Endothelial cell of umbilical vein (primary cell): ENCODE measurements at regions of chr6 and their contacts with region 1.

Region 1: DNA sequence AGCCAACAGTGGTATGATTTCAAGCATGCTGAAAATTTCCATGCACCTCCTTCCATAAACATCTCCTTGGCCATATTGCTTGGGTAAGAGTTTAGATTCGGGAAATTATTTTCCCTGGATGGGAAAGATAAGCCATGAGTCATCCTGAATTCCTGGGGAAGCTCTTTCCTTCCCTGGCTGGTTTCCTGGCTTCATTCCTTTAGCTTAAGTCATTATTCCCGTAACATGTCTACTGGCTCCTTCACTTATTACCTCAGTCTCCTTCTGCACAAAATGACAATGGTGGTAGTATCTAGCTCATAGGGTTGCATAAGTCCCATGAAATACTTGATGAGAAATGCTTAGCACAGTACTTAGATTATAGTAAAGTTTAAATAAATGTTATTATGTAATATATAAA is 27.6 kb downstream of the TINAG start:
- DNase-seq: peak; percentile 99
- H3K4me3 ChIP-seq: no peak overlapping the region
- H3K27ac ChIP-seq: peak overlapping the region; percentile 94
- H3K4me1 ChIP-seq: peaks cover 28% of the 10 kb centered on the region
- H3K27me3 ChIP-seq: no peaks in the 10 kb centered on the region
- CTCF ChIP-seq: no peak
- POLR2A ChIP-seq: peak; percentile 90

Region 2: GRCh38 chr6:54191461-54191860 is 144.4 kb before region 1 on chr6:
- CTCF ChIA-PET with region 1: no interaction called
- POLR2A ChIA-PET with region 1: no interaction called
- dilution Hi-C with region 1: no loop called
- intact Hi-C with region 1: loop called (anchors 2 kb)
- DNase-seq: peak; percentile 79
- H3K4me3 ChIP-seq: no peak overlapping the region
- H3K27ac ChIP-seq: no peak overlapping the region
- H3K4me1 ChIP-seq: peaks cover 25% of the 10 kb centered on the region
- H3K27me3 ChIP-seq: no peaks in the 10 kb centered on the region
- CTCF ChIP-seq: no peak
- POLR2A ChIP-seq: no peak

Region 3: DNA sequence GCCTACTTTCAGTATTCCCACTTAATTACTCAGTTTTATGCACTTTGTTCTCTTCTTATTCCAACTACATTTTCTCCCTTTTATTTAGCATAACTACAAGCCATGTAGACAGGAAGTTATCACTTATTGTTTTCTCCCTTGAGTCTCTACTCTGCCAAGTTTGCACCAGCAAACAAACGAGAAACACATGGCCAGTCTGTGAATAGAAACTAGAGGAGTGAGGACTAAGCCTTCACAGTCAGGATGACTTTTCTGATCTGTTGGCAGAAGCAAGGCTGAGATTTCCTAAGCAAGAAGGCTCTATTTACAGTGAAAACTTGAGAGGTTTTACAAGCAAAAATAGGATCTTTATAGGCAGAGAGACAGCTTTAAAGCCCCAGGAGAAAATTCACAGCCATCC is 97.5 kb before region 1 on chr6:
- CTCF ChIA-PET with region 1: no interaction called
- POLR2A ChIA-PET with region 1: no interaction called
- dilution Hi-C with region 1: no loop called
- intact Hi-C with region 1: loop called (anchors 1 kb)
- DNase-seq: peak; percentile 90
- H3K4me3 ChIP-seq: no peak overlapping the region
- H3K27ac ChIP-seq: peak overlapping the region; percentile 11
- H3K4me1 ChIP-seq: no peaks in the 10 kb centered on the region
- H3K27me3 ChIP-seq: no peaks in the 10 kb centered on the region
- CTCF ChIP-seq: no peak
- POLR2A ChIP-seq: no peak

Region 4: DNA sequence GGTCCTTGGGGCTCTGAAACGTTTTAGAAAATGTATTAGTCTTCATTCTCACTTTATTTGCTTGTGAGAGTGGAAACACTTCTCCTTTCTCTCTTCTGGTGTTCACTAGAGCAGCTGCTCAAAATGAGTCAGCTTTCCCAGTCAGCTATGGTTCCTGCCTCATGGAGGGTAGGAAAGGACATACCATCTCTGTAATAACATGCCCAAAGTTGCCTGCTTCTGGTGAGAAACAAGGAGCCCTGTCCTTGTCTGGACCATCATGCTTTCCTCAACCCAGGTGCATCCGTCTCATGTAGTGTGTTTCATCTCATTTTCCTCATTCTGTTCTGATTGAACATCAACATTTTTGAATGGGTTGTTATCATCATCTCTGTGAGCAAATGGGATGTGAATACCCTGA is 44.7 kb before region 1 on chr6:
- CTCF ChIA-PET with region 1: no interaction called
- POLR2A ChIA-PET with region 1: no interaction called
- dilution Hi-C with region 1: no loop called
- intact Hi-C with region 1: loop called (anchors 1 kb)
- DNase-seq: peak; percentile 94
- H3K4me3 ChIP-seq: no peak overlapping the region
- H3K27ac ChIP-seq: peak overlapping the region; percentile 95
- H3K4me1 ChIP-seq: peaks cover 33% of the 10 kb centered on the region
- H3K27me3 ChIP-seq: no peaks in the 10 kb centered on the region
- CTCF ChIP-seq: no peak
- POLR2A ChIP-seq: peak; percentile 22

Region 5: DNA sequence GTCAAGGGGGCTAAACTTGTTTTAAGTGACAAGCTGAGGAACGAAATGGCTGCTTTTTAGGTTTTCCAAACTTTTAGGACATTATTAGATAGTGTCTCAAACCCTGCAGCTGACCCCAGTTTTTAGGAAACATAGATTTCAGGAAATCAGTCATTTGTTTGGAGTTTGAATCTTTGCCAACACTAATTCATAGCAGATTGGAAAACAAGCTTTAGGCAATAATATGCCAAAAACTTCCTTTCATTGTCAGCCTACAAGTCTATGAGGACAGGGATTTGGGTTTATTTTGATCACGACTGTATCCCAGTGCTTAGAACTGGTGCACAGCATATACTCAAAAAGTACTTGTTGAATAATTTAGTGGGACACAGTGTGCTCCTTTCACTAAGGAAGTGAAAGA is 95.6 kb after region 1 on chr6:
- CTCF ChIA-PET with region 1: no interaction called
- POLR2A ChIA-PET with region 1: no interaction called
- dilution Hi-C with region 1: no loop called
- intact Hi-C with region 1: loop called (anchors 1 kb)
- DNase-seq: peak; percentile 73
- H3K4me3 ChIP-seq: no peak overlapping the region
- H3K27ac ChIP-seq: no peak overlapping the region
- H3K4me1 ChIP-seq: peaks cover 10% of the 10 kb centered on the region
- H3K27me3 ChIP-seq: peaks cover 25 to 26% of the 10 kb centered on the region in 2 experiments
- CTCF ChIP-seq: no peak
- POLR2A ChIP-seq: no peak